Activated naive CD8-positive, alpha-beta T cell treated with anti-CD3 and anti-CD28 coated beads, Interleukin-2, amount 10 ng/mL, durations not matched to agents 7 days and 5 days (primary cell): ENCODE measurements at regions of chr7 and their contacts with region 1.

Region 1: DNA sequence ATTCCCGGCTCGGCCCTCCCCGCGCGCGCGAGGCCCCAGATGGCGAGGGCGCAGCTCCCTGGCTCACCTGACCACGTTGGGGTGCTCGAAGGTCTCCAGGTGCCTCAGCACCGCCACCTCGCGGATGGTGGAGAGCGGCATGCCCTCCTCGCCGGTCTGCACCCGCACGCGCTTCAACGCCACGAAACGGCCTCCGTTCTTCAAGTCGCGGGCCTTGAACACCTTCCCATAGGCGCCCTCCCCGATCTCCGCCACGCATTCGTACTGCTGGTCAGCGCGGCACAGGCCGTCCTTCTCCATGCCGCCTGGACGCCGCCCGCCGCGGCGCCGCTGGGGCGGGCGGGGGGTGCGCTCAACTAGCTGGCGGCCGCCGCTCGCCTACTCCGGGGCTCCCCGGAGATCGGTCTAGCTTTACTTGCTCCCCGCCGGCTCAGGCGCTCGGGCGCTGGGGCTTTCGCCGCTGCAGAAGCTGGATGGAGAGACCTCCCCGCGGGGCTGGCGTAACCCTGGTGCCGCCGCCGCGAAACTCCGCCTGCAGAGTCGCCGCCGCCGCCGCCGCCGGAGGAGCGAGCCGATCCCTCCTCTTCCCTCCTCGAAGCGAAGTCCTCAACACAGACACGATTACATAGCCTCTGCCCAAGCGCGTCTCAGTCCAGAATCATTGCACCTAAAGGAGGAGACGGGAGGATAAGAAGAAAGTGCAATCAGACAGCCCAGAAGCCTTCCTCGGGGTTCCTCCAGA is 3.2 kb downstream of the CDK6 start:
- DNase-seq: peak; percentile 93
- ATAC-seq: peak; percentile 70
- H3K4me3 Mint-ChIP-seq: peak overlapping the region; percentile 98
- H3K27ac Mint-ChIP-seq: peak overlapping the region; percentile 96
- H3K4me1 Mint-ChIP-seq: peaks cover 39% of the 10 kb centered on the region
- H3K27me3 Mint-ChIP-seq: peaks cover 11% of the 10 kb centered on the region

Region 2: DNA sequence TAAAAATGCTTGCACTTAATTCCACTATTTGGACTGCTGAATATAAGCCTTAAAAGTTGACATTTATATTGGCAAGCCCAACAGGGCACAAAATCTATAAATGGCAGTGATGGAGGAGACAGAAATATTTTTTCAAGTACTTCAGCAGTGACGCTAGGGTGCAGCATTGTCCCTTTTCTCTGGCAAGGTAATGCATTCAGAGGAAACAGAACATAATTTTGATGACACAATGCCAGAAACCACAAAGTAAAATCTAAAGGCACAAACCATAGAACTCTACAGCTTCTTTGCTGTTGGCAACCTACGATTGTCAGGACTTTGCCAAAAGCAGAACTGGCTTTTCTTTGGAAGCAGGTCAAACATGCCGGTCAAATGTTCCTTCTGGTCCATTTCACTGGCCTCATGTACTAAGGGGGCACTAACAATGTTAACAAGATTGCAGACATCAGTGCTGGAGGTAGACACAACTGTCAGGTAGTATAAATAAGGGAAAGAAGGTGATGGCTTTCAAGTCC is 212.1 kb before region 1 on chr7:
- POLR2A ChIA-PET with region 1: interaction called, 30 read pairs
- DNase-seq: peak; percentile 56
- ATAC-seq: peak; percentile 81
- H3K4me3 Mint-ChIP-seq: peak overlapping the region; percentile 62
- H3K27ac Mint-ChIP-seq: peak overlapping the region; percentile 87
- H3K4me1 Mint-ChIP-seq: peaks cover 40% of the 10 kb centered on the region
- H3K27me3 Mint-ChIP-seq: no peaks in the 10 kb centered on the region

Region 3: DNA sequence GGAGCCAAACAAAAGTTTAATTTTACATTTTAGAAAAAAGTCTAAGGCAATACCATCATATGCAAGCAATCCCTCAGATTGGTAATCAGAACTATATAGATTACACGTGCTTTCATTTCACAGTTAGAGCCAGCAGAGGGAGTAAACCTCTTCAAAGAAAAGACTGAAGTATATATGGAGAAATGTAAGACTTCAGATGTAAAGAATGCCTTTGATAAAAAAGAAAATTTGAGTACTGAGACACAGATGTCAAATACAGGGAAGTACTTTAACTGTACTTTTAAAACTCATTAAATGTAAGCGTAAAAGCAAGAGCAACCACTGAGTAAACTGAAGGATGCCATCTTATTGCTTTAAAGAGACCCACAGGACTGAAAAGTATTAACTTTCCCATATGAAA is 141.6 kb before region 1 on chr7:
- POLR2A ChIA-PET with region 1: interaction called, 13 read pairs
- DNase-seq: no peak
- ATAC-seq: peak; percentile 90
- H3K4me3 Mint-ChIP-seq: peak overlapping the region; percentile 6
- H3K27ac Mint-ChIP-seq: peak overlapping the region; percentile 81
- H3K4me1 Mint-ChIP-seq: peaks cover 60% of the 10 kb centered on the region
- H3K27me3 Mint-ChIP-seq: no peaks in the 10 kb centered on the region

Region 4: DNA sequence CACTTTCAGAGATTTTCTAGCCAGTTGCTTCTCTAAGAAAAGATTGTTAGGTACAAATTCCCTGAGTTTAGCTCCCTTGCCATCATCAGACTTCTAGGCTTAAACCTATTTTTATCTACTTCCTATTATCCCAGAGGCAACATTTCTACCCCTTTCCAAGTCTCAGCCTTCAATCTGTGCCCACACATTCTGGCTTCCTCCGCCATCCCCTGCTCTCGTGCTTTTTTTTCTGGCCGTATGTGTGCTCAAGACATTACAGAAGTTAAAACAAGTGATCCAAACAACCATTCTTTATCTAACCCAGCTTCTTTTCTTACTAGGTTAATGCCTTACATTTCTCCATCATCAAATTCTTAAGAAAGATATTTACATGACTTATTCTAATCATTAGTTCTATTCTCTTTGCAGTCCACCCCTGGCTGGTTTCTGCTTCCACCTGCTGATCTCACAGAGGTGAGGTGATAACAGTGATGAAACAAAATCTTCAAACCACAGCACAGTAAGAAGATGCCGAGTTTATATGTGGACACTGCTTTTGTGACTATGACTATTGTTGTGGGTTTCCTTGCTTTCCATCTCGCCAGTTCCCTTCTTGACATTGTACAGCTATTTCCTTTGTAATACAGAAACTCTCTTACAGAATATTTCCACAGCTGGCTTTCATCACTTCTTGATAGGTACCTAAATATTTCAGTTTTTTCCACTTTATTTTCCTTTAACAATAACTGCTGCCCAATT is 21.5 kb after region 1 on chr7:
- POLR2A ChIA-PET with region 1: no interaction called
- DNase-seq: no peak
- ATAC-seq: peak; percentile 81
- H3K4me3 Mint-ChIP-seq: no peak overlapping the region
- H3K27ac Mint-ChIP-seq: peak overlapping the region; percentile 2
- H3K4me1 Mint-ChIP-seq: peaks cover 10% of the 10 kb centered on the region
- H3K27me3 Mint-ChIP-seq: peaks cover 5% of the 10 kb centered on the region

Region 5: DNA sequence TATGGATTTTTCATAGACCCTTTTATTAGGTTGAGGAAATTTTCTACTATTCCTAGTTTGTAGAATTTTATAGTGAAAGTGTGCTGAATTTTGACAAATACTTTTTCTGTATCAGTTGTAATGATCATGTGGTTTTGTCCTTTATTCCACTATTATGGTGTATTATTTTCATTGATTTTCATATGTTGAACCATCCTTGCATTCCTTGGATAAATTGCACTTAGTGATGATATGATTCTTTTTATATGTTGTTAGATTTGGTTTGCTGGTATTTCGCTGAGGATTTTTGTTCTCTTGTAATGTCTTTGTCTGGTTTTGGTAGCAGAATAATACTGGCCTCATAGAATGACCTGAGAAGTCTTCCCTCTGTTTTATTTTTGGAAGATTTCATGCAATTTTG is 143.7 kb after region 1 on chr7:
- POLR2A ChIA-PET with region 1: no interaction called
- DNase-seq: no peak
- ATAC-seq: no peak
- H3K4me3 Mint-ChIP-seq: no peak overlapping the region
- H3K27ac Mint-ChIP-seq: no peak overlapping the region
- H3K4me1 Mint-ChIP-seq: peaks cover 11% of the 10 kb centered on the region
- H3K27me3 Mint-ChIP-seq: peaks cover 6% of the 10 kb centered on the region